Mammary epithelial cell (primary cell): ENCODE measurements at regions of chr16 and their contacts with region 1.

Region 1: DNA sequence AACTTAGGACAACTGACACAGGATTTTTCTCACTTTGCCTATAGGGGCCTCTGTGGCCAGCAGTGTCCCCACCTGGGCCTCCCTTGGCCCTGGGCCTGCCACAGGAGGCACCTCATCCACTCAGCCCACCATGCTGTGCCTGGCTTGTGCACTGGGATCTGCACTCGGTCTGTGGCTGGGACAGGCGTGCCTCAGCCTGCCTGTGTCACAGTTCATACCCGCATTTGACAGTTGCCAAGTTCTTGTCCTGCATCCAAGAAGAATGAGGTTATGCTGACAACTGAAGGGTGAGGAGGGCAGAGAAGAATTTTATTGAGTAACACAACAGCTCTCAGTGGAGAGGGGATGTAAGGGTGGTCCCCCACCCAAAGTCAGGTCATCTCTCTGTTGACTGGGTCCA is 36.0 kb downstream of the ZFP90 start:
- DNase-seq: peak; percentile 61
- H3K4me3 ChIP-seq: no peak overlapping the region
- H3K27ac ChIP-seq: no peak overlapping the region
- H3K4me1 ChIP-seq: peaks cover 4% of the 10 kb centered on the region
- H3K27me3 ChIP-seq: no peaks in the 10 kb centered on the region
- CTCF ChIP-seq: no peak

Region 2: DNA sequence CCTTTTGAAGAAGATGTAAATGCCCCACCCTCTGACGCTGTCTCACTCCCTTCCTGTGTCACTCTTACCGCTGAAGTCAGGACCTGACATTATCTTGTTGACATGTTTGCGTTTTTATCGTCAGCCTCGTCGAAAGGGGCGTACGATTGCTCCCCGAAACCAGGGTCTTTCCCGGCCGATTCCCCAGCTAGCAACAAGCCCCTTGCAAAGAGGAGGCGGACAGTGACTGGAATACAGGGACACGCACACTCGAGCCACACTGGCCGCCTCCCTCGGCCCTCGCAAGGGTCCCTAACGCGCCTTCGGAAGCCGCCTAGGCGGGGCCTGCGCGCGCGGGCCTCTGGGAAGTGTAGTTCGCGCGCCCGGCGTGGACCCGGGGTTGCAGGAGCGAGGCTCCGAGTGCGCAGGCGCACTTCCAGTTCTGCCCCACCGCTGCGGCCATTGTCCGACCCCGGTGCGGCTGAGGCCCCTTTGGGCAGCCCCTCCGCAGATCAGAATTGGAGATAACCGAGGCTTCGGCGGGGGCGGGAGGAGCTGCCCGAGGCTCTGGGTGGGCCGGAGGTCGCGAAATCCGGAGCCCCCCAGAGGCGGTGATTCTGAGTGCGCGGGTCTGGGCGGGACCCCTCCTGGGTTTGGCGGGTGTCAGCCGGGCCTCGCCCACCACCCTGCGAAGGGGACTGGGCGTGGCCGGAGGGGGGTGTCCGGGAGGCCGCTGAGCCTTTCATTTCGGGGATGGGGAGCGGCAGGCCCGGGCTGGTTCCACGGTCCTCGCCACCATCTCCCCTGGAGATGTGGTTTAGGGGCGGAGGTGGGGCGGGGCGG is 36.0 kb before region 1 on chr16 and contains the start of gene ZFP90:
- CTCF ChIA-PET with region 1: no interaction called
- dilution Hi-C with region 1: loop called (anchors 5 kb)
- in situ Hi-C with region 1: no loop called
- intact Hi-C with region 1: no loop called
- DNase-seq: peak; percentile 62
- H3K4me3 ChIP-seq: peak within 1 kb of the TSS; percentile 55 to 93 (median 70)
- H3K27ac ChIP-seq: peak within 1 kb of the TSS; percentile 53
- H3K4me1 ChIP-seq: no peaks in the 10 kb centered on the region
- H3K27me3 ChIP-seq: no peaks in the 10 kb centered on the region
- CTCF ChIP-seq: no peak
- total RNA-seq, gene ZFP90: 26.8 to 43.0 TPM

Region 3: DNA sequence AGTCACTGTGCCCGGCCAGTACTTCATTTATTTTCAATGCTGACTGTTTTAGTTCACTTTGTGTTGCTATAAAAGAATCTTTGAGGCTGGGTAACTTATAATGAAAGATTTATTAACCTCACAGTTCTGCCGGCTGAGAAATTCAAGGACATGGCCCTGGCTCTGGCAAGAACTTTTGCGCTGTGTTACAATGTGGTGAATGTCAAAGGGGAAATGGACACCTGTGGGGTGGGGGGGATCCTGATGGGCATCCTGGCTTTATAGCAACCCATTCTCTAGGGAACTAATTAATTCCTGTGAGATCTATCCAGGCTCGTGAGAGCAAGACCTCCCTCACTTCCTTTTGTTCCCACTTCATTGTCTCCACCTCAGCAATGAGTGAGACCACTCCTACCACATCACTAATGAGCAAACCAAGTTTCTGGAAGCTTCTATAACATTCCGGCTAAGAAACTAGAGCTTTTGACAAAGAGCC is 52.9 kb after region 1 on chr16:
- CTCF ChIA-PET with region 1: no interaction called
- dilution Hi-C with region 1: loop called (anchors 10 kb)
- in situ Hi-C with region 1: no loop called
- intact Hi-C with region 1: no loop called
- DNase-seq: peak; percentile 39
- H3K4me3 ChIP-seq: no peak overlapping the region
- H3K27ac ChIP-seq: no peak overlapping the region
- H3K4me1 ChIP-seq: peaks cover 5% of the 10 kb centered on the region
- H3K27me3 ChIP-seq: no peaks in the 10 kb centered on the region
- CTCF ChIP-seq: no peak

Region 4: DNA sequence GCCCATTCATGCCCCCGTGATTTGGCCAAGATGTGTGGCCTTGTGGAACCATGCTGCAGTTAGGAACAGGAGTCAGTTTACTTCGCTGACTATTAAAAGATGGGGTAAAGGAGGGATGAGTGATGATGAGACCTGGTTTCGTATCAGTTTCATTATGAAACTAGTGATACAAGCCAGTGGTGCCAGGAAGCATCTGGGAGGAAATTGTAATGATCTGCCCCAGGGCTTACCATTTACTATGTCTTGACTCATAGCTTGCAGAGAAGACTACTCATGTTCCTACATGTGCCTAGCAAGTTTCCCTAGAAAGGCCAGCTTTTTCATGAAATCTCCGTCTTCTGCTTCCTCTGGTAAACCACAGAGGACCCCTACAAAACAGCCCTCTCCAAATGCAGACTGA is 93.2 kb after region 1 on chr16:
- CTCF ChIA-PET with region 1: no interaction called
- dilution Hi-C with region 1: loop called (anchors 5 kb)
- in situ Hi-C with region 1: no loop called
- intact Hi-C with region 1: no loop called
- DNase-seq: peak; percentile 100
- H3K4me3 ChIP-seq: peak overlapping the region in 1 of 3 experiments; percentile 12
- H3K27ac ChIP-seq: peak overlapping the region; percentile 99
- H3K4me1 ChIP-seq: peaks cover 65% of the 10 kb centered on the region
- H3K27me3 ChIP-seq: no peaks in the 10 kb centered on the region
- CTCF ChIP-seq: no peak